Activated CD4-positive, alpha-beta memory T cell treated with anti-CD3 and anti-CD28 coated beads, Interleukin-2, amount 10 ng/mL, durations not matched to agents 7 days and 5 days (primary cell): ENCODE measurements at regions of chr15 and their contacts with region 1.

Region 1: DNA sequence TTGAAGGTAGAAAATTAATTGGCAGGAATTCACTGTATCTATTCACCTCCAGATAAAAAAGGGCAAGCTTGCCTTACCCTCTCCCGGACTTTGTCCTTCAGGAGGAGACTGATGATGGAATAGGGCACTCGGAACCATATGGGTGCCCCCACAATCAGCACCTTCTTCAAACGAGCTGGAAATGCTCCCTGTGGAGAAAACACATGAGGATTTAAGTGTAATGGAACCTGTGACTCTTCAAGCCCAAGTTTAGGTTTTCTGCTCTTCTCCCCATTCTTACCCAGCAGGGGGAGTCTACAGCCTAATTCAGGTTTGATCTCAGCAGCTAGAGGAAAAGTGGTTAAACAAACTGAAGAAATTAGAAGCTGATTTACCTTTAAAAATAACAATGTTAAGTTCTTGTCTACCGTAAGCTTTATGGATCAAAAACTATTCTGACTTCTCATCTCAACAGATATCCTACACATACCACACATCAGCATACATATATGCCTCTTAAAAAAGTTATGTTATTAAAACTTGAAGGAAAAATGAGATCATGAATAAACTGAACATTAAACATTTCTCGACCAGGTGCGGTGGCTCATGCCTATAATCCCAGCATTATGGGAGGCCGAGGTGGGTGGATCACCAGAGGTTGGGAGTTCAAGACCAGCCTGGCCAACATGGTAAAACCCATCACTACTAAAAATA is 57.5 kb upstream of the SIN3A start:
- DNase-seq: no peak
- H3K4me3 Mint-ChIP-seq: no peak overlapping the region
- H3K27ac Mint-ChIP-seq: no peak overlapping the region
- H3K4me1 Mint-ChIP-seq: no peaks in the 10 kb centered on the region
- H3K27me3 Mint-ChIP-seq: no peaks in the 10 kb centered on the region

Region 2: GRCh38 chr15:75542386-75542797 is 33.4 kb after region 1 on chr15:
- CTCF ChIA-PET with region 1: no interaction called
- POLR2A ChIA-PET with region 1: no interaction called
- DNase-seq: no peak
- H3K4me3 Mint-ChIP-seq: no peak overlapping the region
- H3K27ac Mint-ChIP-seq: no peak overlapping the region
- H3K4me1 Mint-ChIP-seq: peaks cover 9% of the 10 kb centered on the region
- H3K27me3 Mint-ChIP-seq: no peaks in the 10 kb centered on the region

Region 3: GRCh38 chr15:75647370-75648155 is 138.6 kb after region 1 on chr15 and contains the start of gene SNX33:
- CTCF ChIA-PET with region 1: interaction called, 46 read pairs
- POLR2A ChIA-PET with region 1: interaction called, 4 read pairs
- DNase-seq: peak; percentile 60
- H3K4me3 Mint-ChIP-seq: peak within 1 kb of the TSS; percentile 79
- H3K27ac Mint-ChIP-seq: no peak within 1 kb of the TSS
- H3K4me1 Mint-ChIP-seq: peaks cover 29% of the 10 kb centered on the region
- H3K27me3 Mint-ChIP-seq: peaks cover 10% of the 10 kb centered on the region
- total RNA-seq, gene SNX33: 1.8 to 1.9 TPM